ENCODE measurements at regions of chr22 and their contacts with region 1.

Region 1: DNA sequence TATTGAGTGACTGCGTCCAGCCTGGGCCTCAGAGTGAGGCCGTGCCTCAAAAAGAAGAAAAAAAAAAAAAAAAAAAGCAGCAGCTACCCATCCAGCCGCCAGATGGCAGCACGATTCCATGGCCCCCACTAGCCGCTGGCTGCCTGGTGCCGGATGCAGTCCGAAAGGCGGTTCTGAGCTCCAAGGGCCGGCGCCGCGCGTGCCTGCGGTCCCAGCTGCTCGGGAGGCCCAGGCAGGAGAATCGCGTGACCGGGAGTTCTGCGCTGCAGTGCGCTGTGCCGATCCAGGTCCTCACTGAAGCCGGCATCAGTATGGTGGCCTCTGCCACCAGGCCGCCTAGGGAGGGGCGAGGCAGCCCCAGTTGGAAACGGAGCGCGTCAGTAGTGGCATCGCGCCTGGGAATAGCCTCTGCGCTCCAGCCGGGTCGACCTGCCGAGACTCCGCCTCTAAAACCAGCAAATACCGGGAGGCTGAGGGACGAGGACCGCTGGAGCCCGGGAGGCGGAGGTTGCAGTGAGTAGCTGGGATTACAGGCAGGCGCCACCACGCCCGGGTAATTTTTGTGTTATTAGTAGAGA is 19.3 kb downstream of the SCARF2 start:
- DNase-seq: peak; percentile 90
- ATAC-seq: peak; percentile 91

Region 2: GRCh38 chr22:20456064-20456721 is 37.9 kb after region 1 on chr22:
- intact Hi-C with region 1: loop called (anchors 2 kb)
- DNase-seq: peak; percentile 84
- ATAC-seq: peak; percentile 93

Region 3: GRCh38 chr22:20495861-20496681 is 77.8 kb after region 1 on chr22:
- intact Hi-C with region 1: loop called (anchors 5 kb)
- DNase-seq: peak; percentile 95
- ATAC-seq: peak; percentile 98